ENCODE measurements at regions of chr5 and their contacts with region 1.

Region 1: GRCh38 chr5:147567917-147568598 is 58.2 kb upstream of the DPYSL3 start:
- DNase-seq: no peak
- ATAC-seq: no peak
- H3K4me3 ChIP-seq: no peak overlapping the region
- H3K27ac ChIP-seq: no peak overlapping the region
- H3K4me1 ChIP-seq: peaks cover 0 to 18% (median 0%) of the 10 kb centered on the region in 9 donors
- H3K27me3 ChIP-seq: no peaks in the 10 kb centered on the region
- CTCF ChIP-seq: no peak

Region 2: GRCh38 chr5:147382776-147383175 is 185.3 kb before region 1 on chr5:
- intact Hi-C with region 1: loop called in 1 of 10 experiments (anchors 10 kb)
- DNase-seq: no peak
- ATAC-seq: peak in 6 of 8 donors; percentile 12 to 71 (median 42)
- H3K4me3 ChIP-seq: peak overlapping the region in 8 of 10 donors; percentile 23 to 45 (median 38)
- H3K27ac ChIP-seq: peak overlapping the region in 4 of 10 donors; percentile 7 to 19 (median 16)
- H3K4me1 ChIP-seq: no peaks in the 10 kb centered on the region
- H3K27me3 ChIP-seq: no peaks in the 10 kb centered on the region
- CTCF ChIP-seq: no peak

Region 3: DNA sequence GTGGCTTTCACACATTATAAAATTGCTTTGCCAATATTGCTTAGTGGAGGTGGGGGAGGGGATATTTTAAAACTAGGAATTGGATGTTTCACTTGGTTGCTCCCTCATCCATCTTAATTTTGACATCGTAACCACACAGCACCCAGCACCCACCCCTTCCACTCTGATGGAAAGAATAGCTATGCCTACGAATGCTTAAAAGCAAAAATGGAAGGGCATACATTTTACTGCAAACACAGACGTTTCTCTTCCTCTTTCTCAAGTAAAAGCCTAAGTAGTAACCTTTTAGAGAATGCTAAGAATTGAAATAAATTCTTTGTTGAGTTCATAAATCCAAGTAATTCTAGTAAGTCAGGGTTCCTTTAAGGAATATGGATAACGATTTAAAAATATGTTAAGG is 144.5 kb after region 1 on chr5:
- intact Hi-C with region 1: no loop called
- DNase-seq: no peak
- ATAC-seq: no peak
- H3K4me3 ChIP-seq: no peak overlapping the region
- H3K27ac ChIP-seq: no peak overlapping the region
- H3K4me1 ChIP-seq: no peaks in the 10 kb centered on the region
- H3K27me3 ChIP-seq: peaks cover 0 to 3% (median 0%) of the 10 kb centered on the region in 7 donors
- CTCF ChIP-seq: no peak